ENCODE measurements at regions of chr15 and their contacts with region 1.

Region 1: GRCh38 chr15:79329171-79329611 is 18.3 kb downstream of the TMED3 start:
- DNase-seq: peak; percentile 84
- H3K4me3 ChIP-seq: no peak overlapping the region
- H3K27ac ChIP-seq: peak overlapping the region; percentile 78
- H3K4me1 ChIP-seq: peaks cover 10% of the 10 kb centered on the region
- H3K27me3 ChIP-seq: no peaks in the 10 kb centered on the region
- CTCF ChIP-seq: no peak
- POLR2A ChIP-seq: no peak

Region 2: DNA sequence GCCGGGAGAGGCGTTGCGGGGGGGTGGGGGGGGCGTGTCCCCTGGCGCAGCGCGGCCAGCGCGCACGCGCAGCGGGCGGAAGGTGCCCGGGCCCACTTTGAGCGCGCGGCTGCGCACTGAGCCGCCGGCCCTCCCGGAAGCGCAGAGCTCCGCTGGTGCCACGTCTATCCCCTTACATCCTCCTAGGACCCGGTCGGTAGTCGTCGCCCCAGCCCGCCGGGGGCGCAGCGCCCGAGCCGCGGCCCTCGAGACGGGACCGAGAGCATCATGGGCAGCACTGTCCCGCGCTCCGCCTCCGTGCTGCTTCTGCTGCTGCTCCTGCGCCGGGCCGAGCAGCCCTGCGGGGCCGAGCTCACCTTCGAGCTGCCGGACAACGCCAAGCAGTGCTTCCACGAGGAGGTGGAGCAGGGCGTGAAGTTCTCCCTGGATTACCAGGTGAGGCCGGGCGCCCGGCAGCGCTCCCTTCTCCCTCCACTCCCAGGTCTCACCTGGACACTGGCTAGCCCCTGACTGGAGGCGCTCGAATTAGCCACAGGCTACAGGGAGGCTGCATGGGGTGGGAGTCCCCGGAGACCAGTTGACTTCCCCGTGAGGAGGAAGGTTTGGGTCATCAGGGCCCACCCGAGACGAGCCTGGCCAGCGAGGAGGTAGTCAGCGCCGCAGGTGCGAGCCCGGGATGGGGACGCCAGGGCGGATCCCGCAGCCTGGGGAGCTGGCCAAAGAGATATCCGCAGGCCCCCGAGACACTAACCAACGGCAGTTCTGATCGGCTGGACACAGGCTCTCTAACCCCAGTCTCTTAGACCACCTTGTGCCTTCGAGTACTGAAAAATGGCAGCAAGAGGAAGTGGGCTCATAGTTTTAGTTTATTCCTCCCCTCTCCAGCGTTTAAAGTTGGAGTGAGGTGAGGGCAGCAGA is 17.9 kb before region 1 on chr15 and contains the start of gene TMED3:
- CTCF ChIA-PET with region 1: interaction called, 6 read pairs
- POLR2A ChIA-PET with region 1: no interaction called
- dilution Hi-C with region 1: no loop called
- intact Hi-C with region 1: loop called (anchors 2 kb)
- DNase-seq: peak; percentile 85
- H3K4me3 ChIP-seq: peak within 1 kb of the TSS; percentile 61 to 74 (median 65)
- H3K27ac ChIP-seq: peak within 1 kb of the TSS; percentile 22
- H3K4me1 ChIP-seq: peaks cover 16% of the 10 kb centered on the region
- H3K27me3 ChIP-seq: peaks cover 13 to 28% of the 10 kb centered on the region in 2 experiments
- CTCF ChIP-seq: peak; percentile 18 to 35
- POLR2A ChIP-seq: peak; percentile 77
- total RNA-seq, gene TMED3: 105 and 114 TPM in 2 replicates

Region 3: DNA sequence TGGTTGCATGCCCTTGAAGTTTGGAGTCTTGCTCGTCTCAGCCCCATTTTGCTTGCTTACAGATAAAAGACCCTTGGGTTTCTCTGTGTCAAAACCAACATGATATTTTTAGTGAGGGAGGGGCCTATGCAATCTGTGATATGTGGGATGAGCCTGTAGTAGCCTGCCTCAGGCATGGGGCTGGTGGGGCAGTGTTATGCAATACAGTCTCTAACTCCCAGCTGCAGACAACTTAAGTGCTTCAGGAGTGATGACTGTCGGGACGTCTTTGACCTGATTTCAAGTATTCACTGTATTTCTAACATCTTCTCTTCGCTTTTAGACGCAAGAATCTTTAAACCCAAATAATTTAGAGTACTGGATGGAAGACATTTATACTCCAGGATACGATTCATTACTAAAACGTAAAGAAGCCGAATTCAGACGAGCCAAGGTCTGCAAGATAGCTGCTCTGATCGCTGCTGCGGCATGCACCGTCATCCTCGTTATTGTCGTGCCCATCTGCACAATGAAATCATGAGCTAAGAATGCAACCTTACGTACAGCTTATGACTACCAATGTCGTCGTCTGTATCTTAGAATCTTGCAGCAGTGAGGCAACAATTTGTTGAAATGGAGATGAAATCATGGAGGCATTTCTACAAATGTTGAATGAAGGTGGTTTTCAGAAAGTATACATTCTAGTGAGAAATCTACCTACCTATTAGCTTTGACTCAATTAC is 138.8 kb after region 1 on chr15:
- CTCF ChIA-PET with region 1: no interaction called
- POLR2A ChIA-PET with region 1: no interaction called
- dilution Hi-C with region 1: no loop called
- intact Hi-C with region 1: no loop called
- DNase-seq: no peak
- H3K4me3 ChIP-seq: no peak overlapping the region
- H3K27ac ChIP-seq: no peak overlapping the region
- H3K4me1 ChIP-seq: no peaks in the 10 kb centered on the region
- H3K27me3 ChIP-seq: no peaks in the 10 kb centered on the region
- CTCF ChIP-seq: no peak
- POLR2A ChIP-seq: no peak